H1 (cell line): ENCODE measurements at regions of chr5 and their contacts with region 1.

Region 1: GRCh38 chr5:55936100-55936693 is 58.6 kb downstream of the IL6ST start:
- DNase-seq: peak; percentile 67 to 86
- H3K4me3 ChIP-seq: no peak overlapping the region
- H3K27ac ChIP-seq: no peak overlapping the region
- H3K4me1 ChIP-seq: no peaks in the 10 kb centered on the region
- H3K27me3 ChIP-seq: peaks cover 0 to 1% (median 0%) of the 10 kb centered on the region in 4 experiments; a peak in 1 of 7 replicates
- CTCF ChIP-seq: peak; percentile 87 to 96 (median 88)
- EP300 ChIP-seq: no peak
- POLR2A ChIP-seq: no peak
- RAD21 ChIP-seq: peak; percentile 95 to 96

Region 2: DNA sequence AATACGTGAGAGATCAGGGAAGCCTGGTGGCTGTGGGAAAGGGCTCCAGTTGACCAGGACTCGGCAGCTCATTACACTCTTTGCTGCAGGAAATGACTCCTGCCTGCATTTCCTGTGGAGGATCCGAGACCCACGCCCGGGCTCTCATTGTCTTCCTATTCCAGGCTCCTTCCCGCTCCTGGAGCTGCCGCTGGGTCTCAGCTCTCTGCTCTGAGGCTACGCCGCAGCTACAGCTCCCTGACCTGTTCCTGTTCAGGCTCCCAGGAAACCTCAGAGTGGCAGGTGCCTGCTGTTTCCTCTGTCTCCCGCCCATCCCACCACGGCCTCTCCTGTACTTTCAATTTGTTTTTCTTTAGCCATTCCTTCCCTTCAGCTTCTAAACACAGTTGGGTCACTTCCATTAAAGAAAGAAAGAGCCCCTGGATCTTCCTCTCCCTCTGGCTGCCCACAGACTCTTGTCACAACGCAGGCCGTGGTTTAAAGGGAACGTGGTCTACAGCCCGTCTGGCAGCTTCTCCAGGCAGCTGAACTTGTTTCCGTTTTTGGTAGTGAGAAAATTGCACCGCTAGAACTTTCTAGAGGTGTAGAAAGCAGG is 12.9 kb before region 1 on chr5:
- CTCF ChIA-PET with region 1: interaction called, 22 read pairs
- POLR2A ChIA-PET with region 1: no interaction called
- DNase-seq: peak in 1 of 2 experiments; percentile 45
- H3K4me3 ChIP-seq: no peak overlapping the region
- H3K27ac ChIP-seq: no peak overlapping the region
- H3K4me1 ChIP-seq: no peaks in the 10 kb centered on the region; a peak in 1 of 7 replicates
- H3K27me3 ChIP-seq: no peaks in the 10 kb centered on the region
- CTCF ChIP-seq: no peak
- EP300 ChIP-seq: no peak
- POLR2A ChIP-seq: no peak
- RAD21 ChIP-seq: no peak

Region 3: DNA sequence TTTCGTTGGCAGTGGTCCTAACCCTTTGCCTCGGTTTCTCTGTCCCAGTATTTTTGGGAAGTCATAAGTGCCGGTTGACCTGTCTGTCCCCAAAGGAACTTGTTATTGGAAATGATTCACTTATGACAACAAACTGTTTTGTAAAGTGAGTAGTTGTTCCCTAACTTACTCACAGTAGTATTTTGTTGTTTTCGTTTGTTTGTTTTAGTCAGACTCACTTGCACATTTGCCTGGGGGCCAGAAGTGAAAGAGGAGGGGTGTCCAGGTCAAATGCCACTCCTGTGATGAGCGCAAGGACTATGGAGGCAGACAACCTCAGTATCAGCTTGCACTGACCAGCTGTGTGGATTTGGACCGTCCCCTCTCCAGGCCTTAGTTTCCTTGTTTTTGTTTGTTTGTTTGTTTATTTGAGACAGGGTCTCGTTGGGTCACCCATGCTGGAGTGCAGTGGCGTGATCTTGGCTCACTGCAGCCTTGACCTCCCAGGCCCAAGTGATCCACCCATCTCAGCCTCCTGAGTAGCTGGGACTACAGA is 249.6 kb after region 1 on chr5:
- CTCF ChIA-PET with region 1: interaction called, 21 read pairs
- POLR2A ChIA-PET with region 1: no interaction called
- DNase-seq: no peak
- H3K4me3 ChIP-seq: no peak overlapping the region
- H3K27ac ChIP-seq: no peak overlapping the region
- H3K4me1 ChIP-seq: no peaks in the 10 kb centered on the region
- H3K27me3 ChIP-seq: no peaks in the 10 kb centered on the region
- CTCF ChIP-seq: no peak
- EP300 ChIP-seq: no peak
- POLR2A ChIP-seq: no peak
- RAD21 ChIP-seq: no peak

Region 4: GRCh38 chr5:56200856-56201666 is 264.9 kb after region 1 on chr5:
- CTCF ChIA-PET with region 1: interaction called, 71 read pairs
- POLR2A ChIA-PET with region 1: no interaction called
- DNase-seq: peak; percentile 39 to 46
- H3K4me3 ChIP-seq: no peak overlapping the region
- H3K27ac ChIP-seq: no peak overlapping the region
- H3K4me1 ChIP-seq: no peaks in the 10 kb centered on the region
- H3K27me3 ChIP-seq: no peaks in the 10 kb centered on the region
- CTCF ChIP-seq: peak; percentile 54 to 85 (median 73)
- EP300 ChIP-seq: no peak
- POLR2A ChIP-seq: no peak
- RAD21 ChIP-seq: peak; percentile 96

Region 5: DNA sequence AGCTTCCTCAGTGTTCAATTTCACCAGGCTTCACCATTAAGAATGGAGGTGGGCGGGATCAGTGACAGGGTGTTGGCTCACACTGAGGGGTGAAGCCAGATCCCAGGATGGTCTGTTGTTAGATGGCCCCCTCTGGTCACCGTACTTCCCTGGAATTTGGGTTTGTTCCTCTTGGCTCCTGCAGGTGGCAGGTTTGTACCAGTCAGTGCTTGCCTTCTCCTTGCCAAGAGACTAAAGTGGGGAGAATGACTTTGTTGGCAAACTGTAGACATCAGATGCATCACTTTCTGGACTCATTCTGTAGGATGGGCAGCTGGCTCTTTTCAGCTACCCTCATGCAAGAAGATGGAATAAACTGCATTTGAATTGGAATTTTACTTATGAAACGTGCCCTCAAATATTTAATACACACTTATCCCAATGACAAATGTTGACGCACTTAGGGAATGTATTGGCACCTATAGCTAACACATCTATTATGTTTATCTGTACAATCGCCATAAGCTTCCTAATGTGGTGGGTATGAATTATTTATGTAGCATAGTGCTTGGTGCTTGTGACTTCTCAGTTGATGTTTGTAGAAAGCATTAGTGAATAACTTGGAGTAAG is 328.3 kb after region 1 on chr5:
- CTCF ChIA-PET with region 1: interaction called, 27 read pairs
- POLR2A ChIA-PET with region 1: no interaction called
- DNase-seq: peak; percentile 67
- H3K4me3 ChIP-seq: no peak overlapping the region
- H3K27ac ChIP-seq: no peak overlapping the region
- H3K4me1 ChIP-seq: peaks cover 0 to 3% (median 0%) of the 10 kb centered on the region in 4 experiments; a peak in 1 of 7 replicates
- H3K27me3 ChIP-seq: no peaks in the 10 kb centered on the region
- CTCF ChIP-seq: peak; percentile 73 to 96 (median 94)
- EP300 ChIP-seq: no peak
- POLR2A ChIP-seq: no peak
- RAD21 ChIP-seq: peak; percentile 89 to 92